ENCODE measurements at regions of chr9 and their contacts with region 1.

Region 1: GRCh38 chr9:127396808-127397497 is at the start of gene SLC2A8:
- DNase-seq: peak; percentile 99
- ATAC-seq: peak; percentile 94
- H3K4me3 Mint-ChIP-seq: peak within 1 kb of the TSS; percentile 68
- H3K27ac Mint-ChIP-seq: peak within 1 kb of the TSS; percentile 43
- H3K4me1 Mint-ChIP-seq: peaks cover 18% of the 10 kb centered on the region
- H3K27me3 Mint-ChIP-seq: peaks cover 28% of the 10 kb centered on the region
- total RNA-seq, gene SLC2A8: 12.1 to 26.0 TPM

Region 2: GRCh38 chr9:127214421-127215267 is 182.3 kb before region 1 on chr9:
- CTCF ChIA-PET with region 1: interaction called, 10 read pairs
- DNase-seq: peak; percentile 74
- ATAC-seq: peak; percentile 82
- H3K4me3 Mint-ChIP-seq: no peak overlapping the region
- H3K27ac Mint-ChIP-seq: no peak overlapping the region
- H3K4me1 Mint-ChIP-seq: no peaks in the 10 kb centered on the region
- H3K27me3 Mint-ChIP-seq: no peaks in the 10 kb centered on the region

Region 3: GRCh38 chr9:127224178-127224882 is 172.6 kb before region 1 on chr9:
- CTCF ChIA-PET with region 1: interaction called, 13 read pairs
- DNase-seq: peak; percentile 93
- ATAC-seq: peak; percentile 73
- H3K4me3 Mint-ChIP-seq: peak overlapping the region; percentile 75
- H3K27ac Mint-ChIP-seq: peak overlapping the region; percentile 84
- H3K4me1 Mint-ChIP-seq: peaks cover 24% of the 10 kb centered on the region
- H3K27me3 Mint-ChIP-seq: peaks cover 29% of the 10 kb centered on the region

Region 4: DNA sequence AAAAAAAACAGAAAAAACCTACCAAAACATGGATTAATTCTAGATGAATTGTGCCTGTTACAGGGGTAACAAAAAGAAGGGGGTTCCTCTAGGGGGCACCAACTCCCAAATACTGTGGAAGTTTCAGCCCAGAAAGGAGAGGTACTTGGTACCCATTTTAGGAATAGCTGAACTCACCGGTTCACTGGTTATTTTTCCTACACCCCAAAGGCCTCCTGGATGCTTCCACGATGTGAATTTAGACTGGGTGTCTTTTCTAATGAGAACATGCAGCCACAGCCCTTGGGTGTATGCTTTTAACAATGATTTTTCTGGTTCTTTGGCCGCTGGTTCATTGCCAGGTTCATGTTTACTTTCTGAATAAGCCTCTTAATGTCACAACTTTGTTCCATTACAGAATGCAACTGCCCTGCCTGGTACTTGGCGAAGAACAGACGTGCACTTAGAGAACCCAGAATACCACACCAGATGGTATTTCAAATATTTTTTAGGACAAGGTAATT is 85.7 kb before region 1 on chr9:
- CTCF ChIA-PET with region 1: interaction called, 15 read pairs
- DNase-seq: peak; percentile 63
- ATAC-seq: peak; percentile 67
- H3K4me3 Mint-ChIP-seq: no peak overlapping the region
- H3K27ac Mint-ChIP-seq: no peak overlapping the region
- H3K4me1 Mint-ChIP-seq: no peaks in the 10 kb centered on the region
- H3K27me3 Mint-ChIP-seq: peaks cover 4% of the 10 kb centered on the region

Region 5: DNA sequence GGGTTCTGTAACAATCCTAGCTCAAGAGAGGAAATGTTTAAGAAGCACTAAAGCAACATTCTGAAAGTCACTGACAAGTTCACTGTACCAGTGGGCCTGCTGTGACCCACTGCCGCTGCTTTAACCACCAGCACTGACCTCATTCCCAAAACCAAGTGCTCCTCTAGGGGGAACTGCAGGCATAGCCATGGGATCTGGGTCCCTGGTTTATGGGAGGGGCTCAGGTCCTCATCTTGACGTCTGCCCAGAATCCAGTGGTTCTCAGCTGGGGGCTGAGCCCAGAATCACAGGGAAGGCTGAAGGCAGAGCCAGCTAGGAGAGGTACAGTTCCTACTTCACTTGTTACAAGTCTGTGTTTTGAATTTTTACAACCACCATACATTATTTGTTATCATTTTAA is 36.1 kb before region 1 on chr9:
- CTCF ChIA-PET with region 1: interaction called, 10 read pairs
- DNase-seq: no peak
- ATAC-seq: no peak
- H3K4me3 Mint-ChIP-seq: no peak overlapping the region
- H3K27ac Mint-ChIP-seq: no peak overlapping the region
- H3K4me1 Mint-ChIP-seq: peaks cover 15% of the 10 kb centered on the region
- H3K27me3 Mint-ChIP-seq: no peaks in the 10 kb centered on the region

Region 6: GRCh38 chr9:127423934-127424675 is 27.2 kb after region 1 on chr9 and contains the start of gene ZNF79:
- CTCF ChIA-PET with region 1: interaction called, 13 read pairs
- DNase-seq: peak; percentile 96
- ATAC-seq: peak; percentile 87
- H3K4me3 Mint-ChIP-seq: peak within 1 kb of the TSS; percentile 97
- H3K27ac Mint-ChIP-seq: peak within 1 kb of the TSS; percentile 85
- H3K4me1 Mint-ChIP-seq: peaks cover 43% of the 10 kb centered on the region
- H3K27me3 Mint-ChIP-seq: no peaks in the 10 kb centered on the region
- total RNA-seq, gene ZNF79: 14.2 to 18.9 TPM